ENCODE measurements at regions of chr12 and their contacts with region 1.

Region 1: DNA sequence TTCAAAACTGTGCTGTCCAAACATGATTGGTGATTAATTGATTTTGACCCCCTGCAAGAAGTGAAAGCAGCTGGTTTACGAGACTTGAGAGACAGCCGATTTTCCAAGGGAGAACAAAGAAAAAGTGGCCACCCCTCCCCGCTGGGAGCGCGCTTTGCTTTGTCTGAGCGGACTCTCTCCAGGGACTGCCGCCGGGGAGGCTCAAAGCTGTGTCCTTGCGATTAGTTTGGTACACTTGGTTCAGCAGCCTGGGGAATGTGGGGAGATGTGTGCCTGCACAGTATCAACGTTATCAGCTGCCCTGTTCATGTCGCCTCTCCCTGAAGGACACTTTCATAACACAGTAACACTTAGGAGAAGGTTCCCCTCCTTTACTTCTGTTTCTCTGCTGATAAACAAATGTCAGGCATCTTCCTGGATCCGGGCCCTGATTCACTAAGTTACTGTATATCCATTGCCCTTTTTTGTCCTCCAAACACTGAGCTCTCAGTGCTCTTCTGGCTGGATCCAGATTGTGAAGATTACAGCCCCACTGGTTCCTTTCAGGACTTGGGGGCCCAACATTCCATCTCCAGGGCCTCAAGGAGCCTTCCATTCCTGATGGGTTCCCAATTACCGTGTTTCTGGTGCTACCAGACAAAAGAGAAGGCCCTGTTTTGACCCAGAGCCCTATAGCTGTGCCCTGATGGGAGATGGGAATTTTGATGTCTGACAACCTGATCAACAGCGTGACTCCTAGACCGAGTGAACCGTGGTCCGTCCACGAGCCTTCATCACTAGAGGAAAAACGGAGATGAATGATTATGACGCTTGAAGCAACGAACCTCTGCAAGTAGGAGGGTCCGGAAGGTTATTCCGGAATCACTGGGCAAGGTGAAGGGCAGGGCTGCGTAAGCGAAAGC is 31.7 kb upstream of the TUBA1C start:
- DNase-seq: no peak
- H3K4me3 Mint-ChIP-seq: no peak overlapping the region
- H3K27ac Mint-ChIP-seq: no peak overlapping the region
- H3K4me1 Mint-ChIP-seq: peaks cover 16% of the 10 kb centered on the region
- H3K27me3 Mint-ChIP-seq: no peaks in the 10 kb centered on the region

Region 2: DNA sequence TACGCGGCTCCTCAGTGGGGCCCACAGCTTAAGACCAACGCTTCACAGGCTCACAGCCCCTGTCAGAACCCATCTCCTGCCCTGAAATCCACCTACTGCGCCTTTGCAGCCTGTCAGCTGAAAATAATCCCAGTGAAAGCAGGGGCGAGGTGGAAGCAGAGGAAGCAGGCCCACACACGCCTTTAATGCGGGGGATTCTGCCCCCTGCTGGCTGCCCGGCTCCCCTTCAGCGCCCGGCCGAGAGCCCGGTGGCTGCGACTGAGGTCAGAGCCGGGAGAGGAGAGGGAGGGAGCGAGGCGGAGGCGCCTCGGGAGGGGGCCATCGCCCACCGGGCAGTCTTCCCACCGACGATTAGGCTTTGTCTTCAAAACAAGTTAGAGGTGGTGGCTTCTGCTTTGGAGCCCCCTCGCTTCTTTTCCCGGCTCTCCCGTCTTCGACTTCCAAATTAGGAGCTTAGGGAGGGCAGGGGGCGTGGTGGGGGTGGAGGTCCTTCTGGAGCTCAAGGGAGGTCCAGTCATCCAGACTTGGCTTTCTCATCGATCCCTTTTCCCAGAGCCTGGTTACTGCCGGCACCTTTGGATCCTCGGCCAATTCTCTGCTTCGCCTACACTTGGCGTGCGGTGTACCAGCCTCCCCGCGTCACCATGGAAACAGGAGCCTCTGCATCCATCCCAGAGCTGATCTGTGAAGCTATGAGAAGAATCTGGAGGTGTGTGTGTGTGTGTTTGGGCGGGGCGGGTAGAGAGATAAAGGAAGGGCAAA is 342.4 kb before region 1 on chr12:
- CTCF ChIA-PET with region 1: no interaction called
- POLR2A ChIA-PET with region 1: no interaction called
- intact Hi-C with region 1: no loop called
- DNase-seq: peak; percentile 87
- H3K4me3 Mint-ChIP-seq: peak overlapping the region; percentile 32
- H3K27ac Mint-ChIP-seq: no peak overlapping the region
- H3K4me1 Mint-ChIP-seq: peaks cover 7% of the 10 kb centered on the region
- H3K27me3 Mint-ChIP-seq: peaks cover 12% of the 10 kb centered on the region

Region 3: DNA sequence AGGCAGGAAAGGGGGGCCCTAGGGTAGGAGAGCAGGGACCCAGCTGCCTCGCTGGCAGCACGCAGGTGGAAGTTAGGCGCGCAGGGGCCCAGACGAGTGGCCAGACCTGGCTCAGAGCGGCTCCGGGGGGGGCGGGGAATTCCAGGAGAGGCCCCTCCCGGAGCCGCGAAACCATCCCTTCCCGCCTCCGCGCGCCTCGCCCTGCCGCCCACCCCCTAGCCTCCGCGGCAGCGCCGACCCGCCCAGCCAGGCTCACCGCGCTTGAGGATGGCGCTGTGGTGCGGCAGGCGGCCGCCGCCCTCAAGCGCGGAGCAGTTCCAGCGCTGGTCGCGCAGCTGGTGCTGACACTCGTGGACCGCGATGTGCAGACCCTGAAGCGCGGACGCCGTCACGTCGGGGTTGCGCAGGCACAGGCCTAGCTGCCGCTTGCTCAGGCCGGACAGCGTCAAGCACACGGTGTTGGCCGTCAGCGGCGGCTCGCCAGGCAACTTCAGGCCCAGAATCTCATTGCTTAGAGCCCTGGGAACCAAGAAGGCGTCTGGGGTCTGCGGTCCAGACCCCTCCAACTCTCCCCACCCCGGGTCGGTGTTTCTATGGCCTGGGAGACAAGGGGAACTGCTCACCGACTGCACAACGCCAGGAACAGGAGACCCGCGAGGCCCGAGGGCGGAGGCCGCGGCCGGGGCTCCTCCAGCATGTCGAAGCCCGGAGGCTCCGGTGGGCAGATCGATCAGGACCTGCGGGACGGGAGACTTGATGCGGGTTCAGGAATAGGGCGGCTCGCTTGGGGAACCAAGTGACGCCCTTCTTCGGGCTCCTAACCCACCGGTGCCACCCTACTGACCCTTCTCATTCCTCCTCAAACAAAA is 263.1 kb before region 1 on chr12:
- CTCF ChIA-PET with region 1: no interaction called
- POLR2A ChIA-PET with region 1: no interaction called
- intact Hi-C with region 1: no loop called
- DNase-seq: peak; percentile 49
- H3K4me3 Mint-ChIP-seq: no peak overlapping the region
- H3K27ac Mint-ChIP-seq: no peak overlapping the region
- H3K4me1 Mint-ChIP-seq: peaks cover 37% of the 10 kb centered on the region
- H3K27me3 Mint-ChIP-seq: peaks cover 40% of the 10 kb centered on the region

Region 4: DNA sequence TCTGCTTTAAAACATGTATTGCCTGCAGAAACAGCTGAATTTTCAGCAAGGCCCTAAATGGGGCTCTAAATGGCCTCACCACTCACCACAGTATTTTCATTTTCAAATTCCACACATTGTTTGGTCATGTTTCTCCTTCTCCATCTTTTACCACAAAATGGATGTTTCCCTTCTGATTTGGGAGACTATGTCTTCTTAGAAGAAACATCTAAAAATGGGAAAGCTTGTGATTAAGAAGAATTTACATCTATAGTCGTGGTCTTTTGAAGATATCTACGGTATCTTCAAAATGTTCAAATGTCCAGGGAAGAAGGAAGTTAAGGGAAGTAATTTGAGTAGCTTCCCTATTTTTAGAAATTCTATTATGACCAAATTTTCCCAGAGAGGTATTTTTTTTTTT is 11.0 kb after region 1 on chr12:
- CTCF ChIA-PET with region 1: interaction called, 11 read pairs
- POLR2A ChIA-PET with region 1: no interaction called
- intact Hi-C with region 1: no loop called
- DNase-seq: no peak
- H3K4me3 Mint-ChIP-seq: no peak overlapping the region
- H3K27ac Mint-ChIP-seq: no peak overlapping the region
- H3K4me1 Mint-ChIP-seq: no peaks in the 10 kb centered on the region
- H3K27me3 Mint-ChIP-seq: no peaks in the 10 kb centered on the region

Measured in activated CD4-positive, alpha-beta memory T cell treated with anti-CD3 and anti-CD28 coated beads for 36 hours (primary cell).